Activated B cell treated with CpG ODN at 0.5 μM for 24 hours (primary cell): ENCODE measurements at regions of chr6 and their contacts with region 1.

Region 1: DNA sequence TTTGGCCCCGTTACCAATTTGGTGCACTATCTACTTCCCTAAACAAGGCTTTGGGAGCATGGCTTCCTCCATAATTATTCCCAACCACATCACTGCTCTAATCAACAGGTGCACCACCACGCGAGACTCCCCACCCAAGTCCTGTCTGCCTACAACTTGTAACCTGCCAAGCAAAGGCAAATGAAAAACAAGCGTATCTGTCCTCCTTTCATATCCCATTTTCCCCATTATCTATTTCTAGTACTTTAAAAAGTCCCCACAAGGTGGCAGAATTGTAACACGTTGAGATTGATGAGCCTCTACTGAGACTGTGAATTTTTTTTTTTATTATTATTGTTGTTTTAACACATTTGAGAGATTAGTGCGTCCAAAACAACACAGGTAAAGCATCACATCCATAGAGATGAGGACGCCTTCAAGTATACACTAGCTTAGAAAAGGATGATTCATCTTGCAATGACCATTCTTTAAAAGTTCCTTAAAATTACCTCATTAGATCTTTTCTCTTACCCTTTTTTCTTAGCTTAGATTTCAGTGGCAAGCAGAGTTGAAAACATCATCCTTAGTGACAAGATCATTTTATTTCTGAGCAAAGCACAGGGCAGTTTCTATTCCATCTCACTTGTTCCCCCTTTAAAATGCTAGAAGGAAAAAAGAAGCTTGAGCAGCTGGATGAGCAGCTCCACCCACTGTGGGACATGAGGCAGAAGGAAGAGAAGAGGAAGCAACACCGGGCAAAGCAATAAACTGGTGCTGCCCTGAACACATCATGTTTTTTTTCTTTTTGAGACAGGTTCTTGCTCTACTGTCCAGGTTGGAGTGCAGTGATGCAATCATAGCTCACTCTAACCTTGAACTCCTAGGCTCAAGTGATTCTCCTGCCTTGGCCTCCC is 210.8 kb downstream of the ARHGAP18 start:
- DNase-seq: no peak
- ATAC-seq: peak; percentile 79
- H3K4me3 Mint-ChIP-seq: peak overlapping the region; percentile 29
- H3K27ac Mint-ChIP-seq: peak overlapping the region; percentile 15
- H3K4me1 Mint-ChIP-seq: peaks cover 15% of the 10 kb centered on the region
- H3K27me3 Mint-ChIP-seq: no peaks in the 10 kb centered on the region
- CTCF ChIP-seq: peak; percentile 81

Region 2: GRCh38 chr6:129575378-129576118 is 76.4 kb after region 1 on chr6:
- CTCF ChIA-PET with region 1: interaction called, 4 read pairs
- POLR2A ChIA-PET with region 1: no interaction called
- intact Hi-C with region 1: loop called (anchors 1 kb)
- DNase-seq: no peak
- ATAC-seq: no peak
- H3K4me3 Mint-ChIP-seq: peak overlapping the region; percentile 32
- H3K27ac Mint-ChIP-seq: no peak overlapping the region
- H3K4me1 Mint-ChIP-seq: peaks cover 4% of the 10 kb centered on the region
- H3K27me3 Mint-ChIP-seq: no peaks in the 10 kb centered on the region
- CTCF ChIP-seq: no peak

Region 3: GRCh38 chr6:129730477-129731165 is 231.4 kb after region 1 on chr6:
- CTCF ChIA-PET with region 1: interaction called, 18 read pairs
- POLR2A ChIA-PET with region 1: no interaction called
- intact Hi-C with region 1: loop called (anchors 1 kb)
- DNase-seq: no peak
- ATAC-seq: peak; percentile 49
- H3K4me3 Mint-ChIP-seq: no peak overlapping the region
- H3K27ac Mint-ChIP-seq: no peak overlapping the region
- H3K4me1 Mint-ChIP-seq: no peaks in the 10 kb centered on the region
- H3K27me3 Mint-ChIP-seq: no peaks in the 10 kb centered on the region
- CTCF ChIP-seq: peak; percentile 69

Region 4: GRCh38 chr6:130259557-130259956 is 760.4 kb after region 1 on chr6:
- CTCF ChIA-PET with region 1: no interaction called
- POLR2A ChIA-PET with region 1: no interaction called
- intact Hi-C with region 1: loop called (anchors 10 kb)
- DNase-seq: no peak
- ATAC-seq: peak; percentile 64
- H3K4me3 Mint-ChIP-seq: peak overlapping the region; percentile 85
- H3K27ac Mint-ChIP-seq: peak overlapping the region; percentile 95
- H3K4me1 Mint-ChIP-seq: peaks cover 37% of the 10 kb centered on the region
- H3K27me3 Mint-ChIP-seq: no peaks in the 10 kb centered on the region
- CTCF ChIP-seq: no peak

Region 5: GRCh38 chr6:130843575-130844320 is 1344.6 kb after region 1 on chr6:
- CTCF ChIA-PET with region 1: no interaction called
- POLR2A ChIA-PET with region 1: no interaction called
- intact Hi-C with region 1: loop called (anchors 10 kb)
- DNase-seq: no peak
- ATAC-seq: peak; percentile 73
- H3K4me3 Mint-ChIP-seq: no peak overlapping the region
- H3K27ac Mint-ChIP-seq: no peak overlapping the region
- H3K4me1 Mint-ChIP-seq: peaks cover 19% of the 10 kb centered on the region
- H3K27me3 Mint-ChIP-seq: no peaks in the 10 kb centered on the region
- CTCF ChIP-seq: peak; percentile 31